K562 (cell line): ENCODE measurements at regions of chr17 and their contacts with region 1.

Region 1: DNA sequence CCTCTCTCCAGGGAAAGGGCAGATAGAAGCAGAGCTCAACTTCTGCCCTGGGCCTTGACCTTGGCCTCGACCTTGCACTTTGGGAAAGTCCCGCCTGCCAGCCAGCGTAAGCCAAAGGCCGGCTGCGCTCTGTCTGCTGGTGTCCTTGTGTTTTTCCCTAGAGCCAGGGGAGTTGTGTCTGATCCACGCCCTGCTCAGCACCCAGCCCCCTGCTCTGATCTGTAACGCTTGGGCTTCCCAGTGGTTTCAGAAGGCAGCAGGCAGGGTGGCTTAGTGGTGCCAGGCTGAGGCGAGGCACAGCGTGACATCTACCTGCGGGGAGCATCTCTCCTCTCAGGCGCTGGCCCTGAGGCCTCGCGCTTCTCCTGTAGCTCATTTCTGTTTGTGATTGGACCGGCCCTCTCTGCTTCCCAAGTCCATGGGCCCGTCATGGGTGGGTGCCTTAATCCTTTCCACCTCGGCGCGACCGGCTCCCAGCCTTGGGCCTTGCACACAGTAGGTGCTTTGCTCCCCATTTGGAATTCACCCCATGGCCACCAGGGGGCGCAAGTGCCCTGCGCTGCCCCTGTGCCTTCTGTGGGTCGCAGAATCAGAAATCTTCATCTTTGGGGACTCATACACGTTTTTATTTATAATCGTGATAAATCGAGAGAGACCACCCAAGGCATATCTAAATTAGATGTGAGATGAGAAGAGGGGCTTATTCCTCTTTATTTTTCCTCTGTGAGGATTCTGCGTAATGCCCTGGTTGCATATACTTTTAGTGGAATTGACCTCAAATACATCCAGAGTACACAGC is 24.2 kb downstream of the SGSH start:
- DNase-seq: peak; percentile 54 to 69 (median 64)
- ATAC-seq: peak; percentile 65
- H3K4me3 ChIP-seq: no peak overlapping the region
- H3K27ac ChIP-seq: no peak overlapping the region
- H3K4me1 ChIP-seq: peaks cover 0 to 20% of the 10 kb centered on the region in 2 experiments; a peak in 2 of 5 replicates
- H3K27me3 ChIP-seq: peaks cover 33 to 51% of the 10 kb centered on the region in 2 experiments
- CTCF ChIP-seq: peak; percentile 89 to 95 (median 92)
- EP300 ChIP-seq: no peak
- POLR2A ChIP-seq: no peak
- RAD21 ChIP-seq: peak; percentile 93 to 97

Region 2: DNA sequence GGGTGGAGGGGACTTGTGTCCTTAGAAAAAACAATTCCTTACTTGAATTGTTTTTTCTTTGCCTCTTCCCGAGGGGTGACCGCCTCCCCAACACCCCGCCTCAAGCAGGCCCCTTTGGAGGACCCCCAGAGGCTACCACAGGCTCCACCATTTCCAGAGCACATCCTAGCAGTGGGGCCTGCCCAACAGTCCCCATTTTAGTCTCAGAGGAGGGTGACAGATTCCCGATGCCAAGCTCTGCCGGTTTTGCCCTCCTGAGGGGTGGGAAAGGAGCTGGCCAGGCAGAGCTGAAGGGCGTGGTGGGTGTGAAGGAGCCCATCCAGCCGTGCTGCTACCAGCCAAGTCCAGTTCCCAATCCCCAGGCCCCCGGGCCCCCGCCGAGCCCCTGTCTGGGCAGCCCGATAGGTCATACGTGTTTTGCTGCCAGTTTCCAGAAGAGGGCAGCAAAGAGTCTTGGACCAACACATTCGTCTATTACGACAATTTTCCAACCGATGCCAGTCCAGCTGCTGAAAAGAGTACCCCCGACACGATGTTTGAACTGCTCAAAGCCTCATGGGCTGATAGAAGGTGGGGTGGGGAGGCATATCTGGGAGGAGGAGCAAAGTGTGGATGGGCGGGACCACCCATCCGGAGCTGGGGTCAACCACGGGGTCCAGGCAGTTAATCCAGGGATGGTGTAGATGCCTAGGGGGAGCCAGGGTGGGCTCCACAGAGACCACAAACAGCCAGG is 113.4 kb before region 1 on chr17:
- CTCF ChIA-PET with region 1: no interaction called
- POLR2A ChIA-PET with region 1: interaction called, 4 read pairs
- in situ Hi-C with region 1: no loop called
- intact Hi-C with region 1: loop called (anchors 5 kb)
- DNase-seq: peak; percentile 43 to 73 (median 56)
- ATAC-seq: peak; percentile 77
- H3K4me3 ChIP-seq: no peak overlapping the region
- H3K27ac ChIP-seq: no peak overlapping the region
- H3K4me1 ChIP-seq: peaks cover 0 to 7% of the 10 kb centered on the region in 2 experiments; a peak in 1 of 5 replicates
- H3K27me3 ChIP-seq: peaks cover 36 to 63% of the 10 kb centered on the region in 2 experiments
- CTCF ChIP-seq: peak; percentile 67 to 73 (median 68)
- EP300 ChIP-seq: no peak
- POLR2A ChIP-seq: no peak
- RAD21 ChIP-seq: peak; percentile 29 to 60

Region 3: GRCh38 chr17:80219013-80219762 is 23.3 kb after region 1 on chr17:
- CTCF ChIA-PET with region 1: no interaction called
- POLR2A ChIA-PET with region 1: no interaction called
- in situ Hi-C with region 1: no loop called
- intact Hi-C with region 1: no loop called
- DNase-seq: peak; percentile 65 to 90 (median 72)
- ATAC-seq: peak; percentile 84
- H3K4me3 ChIP-seq: peak overlapping the region; percentile 51
- H3K27ac ChIP-seq: peak overlapping the region; percentile 51; the same call in 2 of the 3 replicates
- H3K4me1 ChIP-seq: peaks cover 9 to 50% of the 10 kb centered on the region in 2 experiments; a peak in 4 of 5 replicates
- H3K27me3 ChIP-seq: no peaks in the 10 kb centered on the region
- CTCF ChIP-seq: no peak
- EP300 ChIP-seq: peak; percentile 22; the same call in 1 of the 2 replicates
- POLR2A ChIP-seq: no peak; the same call in 1 of the 2 replicates
- RAD21 ChIP-seq: no peak

Region 4: GRCh38 chr17:80364216-80364618 is 168.3 kb after region 1 on chr17:
- CTCF ChIA-PET with region 1: interaction called, 4 read pairs
- POLR2A ChIA-PET with region 1: no interaction called
- in situ Hi-C with region 1: no loop called
- intact Hi-C with region 1: loop called (anchors 2 kb)
- DNase-seq: peak in 2 of 4 experiments; percentile 41 to 46
- ATAC-seq: peak; percentile 85
- H3K4me3 ChIP-seq: no peak overlapping the region
- H3K27ac ChIP-seq: no peak overlapping the region
- H3K4me1 ChIP-seq: peaks cover 7 to 14% of the 10 kb centered on the region in 2 experiments; a peak in 4 of 5 replicates
- H3K27me3 ChIP-seq: no peaks in the 10 kb centered on the region
- CTCF ChIP-seq: peak; percentile 60 to 66 (median 66)
- EP300 ChIP-seq: no peak
- POLR2A ChIP-seq: no peak
- RAD21 ChIP-seq: peak; percentile 22 to 58; a peak in 3 of 4 replicates

Region 5: GRCh38 chr17:80414803-80415625 is 219.1 kb after region 1 on chr17 and contains the start of gene ENDOV:
- CTCF ChIA-PET with region 1: no interaction called
- POLR2A ChIA-PET with region 1: no interaction called
- in situ Hi-C with region 1: no loop called
- intact Hi-C with region 1: loop called (anchors 5 kb)
- DNase-seq: peak; percentile 95 to 99 (median 98)
- ATAC-seq: peak; percentile 97
- H3K4me3 ChIP-seq: peak within 1 kb of the TSS; percentile 59
- H3K27ac ChIP-seq: peak within 1 kb of the TSS; percentile 77
- H3K4me1 ChIP-seq: peaks cover 3 to 19% of the 10 kb centered on the region in 2 experiments; a peak in 4 of 5 replicates
- H3K27me3 ChIP-seq: peaks cover 7 to 16% of the 10 kb centered on the region in 2 experiments; a peak in 4 of 5 replicates
- CTCF ChIP-seq: no peak
- EP300 ChIP-seq: no peak
- POLR2A ChIP-seq: peak; percentile 84
- RAD21 ChIP-seq: no peak
- polyA plus RNA-seq, gene ENDOV: 1.2 to 3.2 TPM

Region 6: GRCh38 chr17:80981062-80981902 is 785.4 kb after region 1 on chr17:
- CTCF ChIA-PET with region 1: interaction called, 3 read pairs
- POLR2A ChIA-PET with region 1: no interaction called
- in situ Hi-C with region 1: loop called (anchors 10 kb)
- intact Hi-C with region 1: no loop called
- DNase-seq: peak in 3 of 4 experiments; percentile 80 to 83 (median 82)
- ATAC-seq: peak; percentile 84
- H3K4me3 ChIP-seq: peak overlapping the region; percentile 22; the same call in 1 of the 2 replicates
- H3K27ac ChIP-seq: no peak overlapping the region
- H3K4me1 ChIP-seq: peaks cover 0 to 38% of the 10 kb centered on the region in 2 experiments; a peak in 3 of 5 replicates
- H3K27me3 ChIP-seq: peaks cover 12 to 31% of the 10 kb centered on the region in 2 experiments; a peak in 4 of 5 replicates
- CTCF ChIP-seq: peak; percentile 59 to 77 (median 61)
- EP300 ChIP-seq: no peak
- POLR2A ChIP-seq: no peak
- RAD21 ChIP-seq: peak; percentile 75 to 88